ENCODE measurements at regions of chr3 and their contacts with region 1.

Region 1: DNA sequence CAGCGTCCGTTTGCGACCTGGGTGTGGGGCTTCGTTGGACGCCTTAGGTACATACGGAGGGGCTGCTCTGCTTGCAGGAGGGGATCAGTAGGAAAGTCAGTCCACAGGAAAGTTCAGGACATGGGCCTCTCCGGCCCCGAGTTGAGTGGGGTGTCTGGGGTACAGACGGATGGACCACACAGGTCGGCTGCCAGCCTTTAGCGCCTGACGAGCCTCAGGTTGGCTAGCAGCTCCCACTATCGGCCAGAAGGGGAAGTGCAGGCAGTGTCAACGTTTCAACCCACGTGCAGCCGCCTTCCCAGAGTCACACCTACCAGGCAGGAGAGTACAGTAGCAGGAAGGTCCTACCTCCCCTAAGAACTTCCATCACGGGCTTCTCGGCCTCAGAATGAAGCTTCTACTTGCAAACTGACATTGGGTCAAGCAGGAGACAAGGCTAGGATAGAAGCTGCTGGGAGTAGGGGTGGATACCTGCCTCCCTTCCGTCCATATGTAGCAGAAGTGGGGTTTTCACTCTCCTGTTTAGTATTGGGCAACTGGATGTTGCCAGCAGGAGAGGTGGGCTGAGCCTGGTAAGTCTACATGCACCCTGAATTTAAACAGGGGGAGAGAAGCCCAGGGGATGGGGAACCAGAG is 1.8 kb upstream of the SCN5A start:
- DNase-seq: peak; percentile 65 to 84 (median 83)
- ATAC-seq: peak; percentile 52 to 53
- H3K4me3 ChIP-seq: no peak overlapping the region
- H3K27ac ChIP-seq: no peak overlapping the region
- H3K4me1 ChIP-seq: peaks cover 3% of the 10 kb centered on the region
- H3K27me3 ChIP-seq: no peaks in the 10 kb centered on the region

Region 2: DNA sequence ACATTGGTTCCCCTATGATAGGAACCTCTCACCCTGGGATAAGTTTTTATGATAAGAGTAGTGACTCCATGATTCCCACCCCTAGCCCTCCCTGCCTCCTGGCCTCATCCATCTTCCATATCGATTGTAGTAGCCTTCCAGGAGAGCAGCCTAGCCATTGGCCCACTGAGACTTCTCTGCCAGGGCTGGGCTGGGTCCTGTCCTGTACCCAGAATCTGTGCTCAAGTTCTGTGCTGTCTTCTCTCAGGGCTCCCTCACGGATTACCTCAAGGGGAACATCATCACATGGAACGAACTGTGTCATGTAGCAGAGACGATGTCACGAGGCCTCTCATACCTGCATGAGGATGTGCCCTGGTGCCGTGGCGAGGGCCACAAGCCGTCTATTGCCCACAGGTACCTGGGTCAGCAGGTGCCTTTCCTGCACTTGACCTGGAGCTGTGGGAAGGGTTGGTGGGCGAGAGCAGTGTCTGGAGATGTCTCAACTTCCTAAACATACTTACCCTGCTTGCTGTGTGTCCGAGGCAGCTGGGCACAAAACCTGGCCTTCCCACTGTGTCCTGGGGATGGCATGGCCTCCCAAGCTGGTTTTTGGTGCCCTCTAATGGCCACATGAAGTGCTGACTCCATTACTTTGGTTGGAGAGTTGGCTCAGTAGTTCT is 171.7 kb before region 1 on chr3:
- intact Hi-C with region 1: no loop called
- DNase-seq: peak; percentile 59 to 82 (median 79)
- ATAC-seq: peak; percentile 77 to 81
- H3K4me3 ChIP-seq: no peak overlapping the region
- H3K27ac ChIP-seq: no peak overlapping the region
- H3K4me1 ChIP-seq: no peaks in the 10 kb centered on the region
- H3K27me3 ChIP-seq: no peaks in the 10 kb centered on the region

Region 3: DNA sequence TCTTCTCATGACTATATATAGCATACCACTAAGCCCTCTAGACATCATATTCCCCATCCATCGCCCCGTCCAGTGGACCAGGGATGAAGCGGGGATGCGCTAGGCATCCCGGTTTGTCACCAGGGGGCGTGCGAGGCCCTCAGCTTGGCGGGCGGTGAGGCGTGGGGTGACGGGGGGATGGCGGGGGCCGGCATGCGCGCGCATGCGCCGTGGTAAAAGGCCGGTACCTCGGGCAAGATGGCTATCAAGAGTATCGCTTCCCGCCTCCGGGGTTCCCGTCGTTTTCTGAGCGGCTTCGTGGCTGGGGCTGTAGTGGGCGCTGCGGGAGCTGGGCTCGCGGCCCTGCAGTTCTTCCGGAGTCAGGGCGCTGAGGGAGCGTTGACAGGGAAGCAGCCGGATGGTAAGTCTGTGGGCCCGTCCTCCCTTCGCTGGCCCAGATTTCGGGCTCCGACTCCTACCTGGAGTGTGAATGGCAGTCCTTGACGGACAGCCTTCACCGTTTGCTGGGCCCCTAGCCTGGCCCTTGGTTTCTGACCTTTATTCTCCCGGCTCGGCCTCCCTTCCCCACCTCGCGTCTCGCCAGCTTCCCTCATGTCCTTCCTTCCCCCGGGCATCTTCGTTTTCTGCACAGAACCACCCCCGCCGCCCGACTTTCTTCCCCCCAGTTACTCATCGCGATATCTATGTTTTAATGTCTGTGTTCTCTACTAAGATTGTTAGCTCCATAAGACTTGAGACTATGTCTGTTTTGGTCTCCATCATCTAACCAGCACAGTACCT is 155.0 kb before region 1 on chr3 and contains the start of gene EXOG:
- intact Hi-C with region 1: loop called in 2 of 4 experiments (anchors 5 to 10 kb)
- DNase-seq: peak; percentile 96 to 98 (median 96)
- ATAC-seq: peak; percentile 95 to 96
- H3K4me3 ChIP-seq: peak within 1 kb of the TSS; percentile 82
- H3K27ac ChIP-seq: peak within 1 kb of the TSS; percentile 76
- H3K4me1 ChIP-seq: no peaks in the 10 kb centered on the region
- H3K27me3 ChIP-seq: no peaks in the 10 kb centered on the region
- total RNA-seq, gene EXOG: 19.4 to 27.7 (median 24.6) TPM

Region 4: GRCh38 chr3:38521391-38521987 is 129.8 kb before region 1 on chr3:
- intact Hi-C with region 1: loop called (anchors 5 kb)
- DNase-seq: peak; percentile 45 to 67 (median 47)
- ATAC-seq: peak; percentile 40 to 61
- H3K4me3 ChIP-seq: no peak overlapping the region
- H3K27ac ChIP-seq: no peak overlapping the region
- H3K4me1 ChIP-seq: peaks cover 2% of the 10 kb centered on the region
- H3K27me3 ChIP-seq: no peaks in the 10 kb centered on the region